Activated CD4-positive, alpha-beta T cell treated with anti-CD3 and anti-CD28 coated beads, Interleukin-2, amount 10 ng/mL, durations not matched to agents 24 days and 14 days (primary cell): ENCODE measurements at regions of chr2 and their contacts with region 1.

Region 1: DNA sequence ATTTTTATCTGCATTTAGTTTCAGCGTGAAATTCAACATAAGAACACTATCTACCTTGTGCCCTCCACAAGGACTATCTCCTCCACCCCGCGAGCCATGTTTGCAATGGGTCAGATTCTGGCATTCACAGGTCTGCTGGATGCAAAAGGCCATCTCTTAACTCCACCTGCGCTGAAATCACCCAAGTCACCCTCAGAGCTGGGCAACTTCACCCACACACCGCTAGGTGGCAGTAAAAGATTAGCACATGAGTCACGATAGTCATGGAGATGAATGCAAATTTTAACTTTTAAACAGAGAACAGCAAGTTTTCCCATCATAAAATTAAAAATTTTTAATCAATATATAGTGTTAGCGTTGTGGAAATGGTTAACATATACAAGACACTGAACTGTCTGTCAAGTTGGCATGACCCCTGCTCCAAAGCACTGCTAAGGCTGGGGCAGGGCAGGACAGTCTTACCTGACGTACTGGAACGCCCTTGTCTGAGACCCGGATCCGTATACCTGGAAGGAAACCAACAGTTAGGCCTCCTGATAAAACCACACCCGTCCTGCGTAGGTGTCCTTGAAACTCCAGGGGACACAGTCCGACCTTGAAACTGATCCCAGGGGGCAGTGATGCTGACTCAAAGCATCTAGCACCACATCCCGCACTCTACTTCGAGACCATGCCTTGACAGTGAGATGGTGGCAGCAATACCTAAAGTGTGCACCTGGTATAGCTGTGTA is 89.6 kb downstream of the UXS1 start:
- DNase-seq: peak; percentile 90
- H3K4me3 Mint-ChIP-seq: no peak overlapping the region
- H3K27ac Mint-ChIP-seq: no peak overlapping the region
- H3K4me1 Mint-ChIP-seq: peaks cover 15% of the 10 kb centered on the region
- H3K27me3 Mint-ChIP-seq: no peaks in the 10 kb centered on the region

Region 2: GRCh38 chr2:106160786-106161261 is 56.3 kb after region 1 on chr2:
- intact Hi-C with region 1: loop called (anchors 1 kb)
- DNase-seq: peak; percentile 80
- H3K4me3 Mint-ChIP-seq: peak overlapping the region; percentile 82
- H3K27ac Mint-ChIP-seq: peak overlapping the region; percentile 90
- H3K4me1 Mint-ChIP-seq: peaks cover 57% of the 10 kb centered on the region
- H3K27me3 Mint-ChIP-seq: no peaks in the 10 kb centered on the region

Region 3: GRCh38 chr2:106269591-106270291 is 165.2 kb after region 1 on chr2:
- intact Hi-C with region 1: loop called (anchors 10 kb)
- DNase-seq: peak; percentile 75
- H3K4me3 Mint-ChIP-seq: peak overlapping the region; percentile 87
- H3K27ac Mint-ChIP-seq: peak overlapping the region; percentile 48
- H3K4me1 Mint-ChIP-seq: peaks cover 18% of the 10 kb centered on the region
- H3K27me3 Mint-ChIP-seq: peaks cover 24% of the 10 kb centered on the region

Region 4: GRCh38 chr2:106542811-106543259 is 438.3 kb after region 1 on chr2:
- intact Hi-C with region 1: loop called (anchors 2 kb)
- DNase-seq: peak; percentile 92
- H3K4me3 Mint-ChIP-seq: peak overlapping the region; percentile 76
- H3K27ac Mint-ChIP-seq: no peak overlapping the region
- H3K4me1 Mint-ChIP-seq: peaks cover 2% of the 10 kb centered on the region
- H3K27me3 Mint-ChIP-seq: peaks cover 29% of the 10 kb centered on the region

Region 5: GRCh38 chr2:106582148-106583143 is 477.9 kb after region 1 on chr2:
- intact Hi-C with region 1: loop called (anchors 5 kb)
- DNase-seq: peak; percentile 87
- H3K4me3 Mint-ChIP-seq: peak overlapping the region; percentile 90
- H3K27ac Mint-ChIP-seq: peak overlapping the region; percentile 1
- H3K4me1 Mint-ChIP-seq: peaks cover 15% of the 10 kb centered on the region
- H3K27me3 Mint-ChIP-seq: peaks cover 46% of the 10 kb centered on the region